Activated CD8-positive, alpha-beta T cell treated with anti-CD3 and anti-CD28 coated beads, Interleukin-2, amount 10 ng/mL, durations not matched to agents 7 days and 5 days (primary cell): ENCODE measurements at regions of chr5 and their contacts with region 1.

Region 1: DNA sequence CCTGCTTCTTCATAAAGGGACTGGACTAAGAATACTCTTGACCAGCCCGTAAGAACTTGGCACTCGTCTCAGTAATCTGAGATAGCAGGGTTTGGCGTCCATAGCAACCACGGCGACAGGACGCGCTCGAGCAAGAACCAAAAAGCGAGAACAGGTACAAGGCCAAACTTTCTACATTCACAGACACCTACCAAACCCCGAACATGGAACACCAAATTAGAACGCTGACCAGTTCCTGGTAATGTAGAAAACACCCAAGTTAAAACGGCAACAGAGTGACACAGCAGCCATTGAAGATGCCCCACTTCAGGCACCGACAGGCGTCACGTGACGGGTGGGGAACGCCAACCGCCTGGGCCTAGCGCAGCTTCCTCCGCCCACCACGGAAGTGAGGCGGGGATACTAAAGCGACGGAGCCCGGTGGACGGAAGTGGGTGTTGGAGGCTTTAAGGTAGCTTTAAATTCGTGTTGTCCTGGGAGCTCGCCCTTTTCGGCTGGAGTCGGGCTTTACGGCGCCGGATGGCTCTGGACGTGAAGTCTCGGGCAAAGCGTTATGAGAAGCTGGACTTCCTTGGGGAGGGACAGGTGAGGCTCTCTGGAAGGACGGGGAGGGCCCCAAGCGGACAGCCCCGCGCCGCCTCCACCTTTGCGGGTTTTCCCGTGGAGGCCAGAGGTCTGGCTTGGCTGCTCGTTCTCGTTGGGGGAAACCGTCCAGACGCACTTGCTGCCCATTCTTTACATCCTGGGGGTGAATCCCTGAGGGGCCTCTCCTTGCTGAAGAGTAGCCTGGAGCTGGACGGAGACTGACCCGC is at the start of gene CDK7:
- DNase-seq: peak; percentile 95
- ATAC-seq: peak; percentile 100
- H3K4me3 Mint-ChIP-seq: peak within 1 kb of the TSS; percentile 97
- H3K27ac Mint-ChIP-seq: peak within 1 kb of the TSS; percentile 87
- H3K4me1 Mint-ChIP-seq: peaks cover 33% of the 10 kb centered on the region
- H3K27me3 Mint-ChIP-seq: no peaks in the 10 kb centered on the region
- total RNA-seq, gene CDK7: 23.9 to 28.3 TPM

Region 2: DNA sequence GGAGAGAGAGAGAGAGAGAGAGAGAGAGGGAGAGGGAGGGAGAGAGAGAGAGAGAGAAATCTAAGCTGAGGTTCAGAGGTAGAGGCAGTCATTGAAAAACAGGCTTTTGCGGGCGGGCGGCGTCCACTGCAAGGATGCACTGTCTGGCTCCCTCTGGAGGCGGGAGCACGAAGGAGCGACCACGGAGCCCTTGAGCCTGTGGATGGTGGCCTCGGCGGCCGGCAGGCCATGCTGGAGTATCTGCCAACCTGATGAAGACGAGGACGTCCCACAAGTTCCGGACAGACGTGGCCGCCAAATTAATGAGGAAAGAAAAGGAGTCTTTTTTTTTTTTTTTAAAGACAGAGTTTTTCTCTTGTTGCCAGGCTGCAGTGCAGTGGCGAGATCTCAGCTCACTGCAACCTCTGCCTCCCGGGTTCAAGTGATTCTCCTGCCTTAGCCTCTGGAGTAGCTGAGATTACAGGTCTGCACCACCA is 100.2 kb after region 1 on chr5:
- CTCF ChIA-PET with region 1: interaction called, 10 read pairs
- POLR2A ChIA-PET with region 1: interaction called, 3 read pairs
- DNase-seq: peak; percentile 87
- ATAC-seq: peak; percentile 70
- H3K4me3 Mint-ChIP-seq: no peak overlapping the region
- H3K27ac Mint-ChIP-seq: no peak overlapping the region
- H3K4me1 Mint-ChIP-seq: peaks cover 21% of the 10 kb centered on the region
- H3K27me3 Mint-ChIP-seq: no peaks in the 10 kb centered on the region